ENCODE measurements at regions of chr3 and their contacts with region 1.

Region 1: GRCh38 chr3:114706591-114707232 is 412.9 kb downstream of the TIGIT start:
- DNase-seq: peak; percentile 66
- H3K4me3 Mint-ChIP-seq: no peak overlapping the region
- H3K27ac Mint-ChIP-seq: no peak overlapping the region
- H3K4me1 Mint-ChIP-seq: peaks cover 11% of the 10 kb centered on the region
- H3K27me3 Mint-ChIP-seq: no peaks in the 10 kb centered on the region

Region 2: DNA sequence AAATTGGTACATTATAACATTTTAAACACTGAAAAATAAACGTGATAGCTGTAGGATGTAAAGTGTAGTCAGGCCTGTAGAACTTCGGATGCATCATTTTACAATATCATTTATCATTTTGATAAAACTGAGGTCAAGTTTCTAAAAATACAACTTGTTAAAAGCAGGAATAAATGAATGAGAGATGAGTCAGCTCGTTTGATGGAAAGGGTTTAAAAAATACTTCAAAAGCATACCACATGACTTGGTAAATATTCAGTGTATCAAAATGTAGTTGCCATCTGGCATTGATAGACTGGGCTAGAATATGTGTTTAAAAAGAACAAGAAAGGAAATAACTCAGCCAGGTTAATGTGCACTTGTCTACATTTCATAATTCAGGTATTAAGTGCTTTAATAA is 55.9 kb before region 1 on chr3:
- CTCF ChIA-PET with region 1: no interaction called
- intact Hi-C with region 1: no loop called
- DNase-seq: no peak
- H3K4me3 Mint-ChIP-seq: no peak overlapping the region
- H3K27ac Mint-ChIP-seq: no peak overlapping the region
- H3K4me1 Mint-ChIP-seq: peaks cover 15% of the 10 kb centered on the region
- H3K27me3 Mint-ChIP-seq: no peaks in the 10 kb centered on the region

Region 3: DNA sequence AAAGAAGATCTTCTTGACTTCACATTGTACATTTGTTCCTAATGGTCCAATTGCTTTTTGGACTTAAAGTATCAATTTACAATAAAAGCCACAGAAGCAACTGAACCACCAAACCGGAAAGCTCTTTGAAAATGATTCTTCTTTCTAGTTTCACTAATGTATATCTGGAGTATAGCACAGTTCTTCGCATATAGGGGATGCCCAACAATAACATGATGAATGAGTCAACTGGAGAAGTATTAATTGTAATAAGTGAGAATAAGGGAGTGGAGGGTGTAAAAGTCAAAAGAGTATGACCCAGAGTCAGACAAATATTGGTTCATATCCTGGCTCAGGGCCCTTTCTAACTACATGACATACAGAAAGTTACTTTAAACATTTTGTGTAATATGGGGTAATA is 15.2 kb after region 1 on chr3:
- CTCF ChIA-PET with region 1: interaction called, 4 read pairs
- intact Hi-C with region 1: loop called (anchors 2 kb)
- DNase-seq: no peak
- H3K4me3 Mint-ChIP-seq: no peak overlapping the region
- H3K27ac Mint-ChIP-seq: no peak overlapping the region
- H3K4me1 Mint-ChIP-seq: peaks cover 23% of the 10 kb centered on the region
- H3K27me3 Mint-ChIP-seq: no peaks in the 10 kb centered on the region

Region 4: GRCh38 chr3:114764056-114764492 is 57.4 kb after region 1 on chr3:
- CTCF ChIA-PET with region 1: no interaction called
- intact Hi-C with region 1: no loop called
- DNase-seq: no peak
- H3K4me3 Mint-ChIP-seq: no peak overlapping the region
- H3K27ac Mint-ChIP-seq: no peak overlapping the region
- H3K4me1 Mint-ChIP-seq: peaks cover 11% of the 10 kb centered on the region
- H3K27me3 Mint-ChIP-seq: no peaks in the 10 kb centered on the region